Vagina (tissue), 2 donors: ENCODE measurements at regions of chr12 and their contacts with region 1.

Region 1: GRCh38 chr12:54398995-54399793 is 14.7 kb upstream of the ZNF385A start:
- DNase-seq: no peak
- H3K4me3 ChIP-seq: no peak overlapping the region
- H3K27ac ChIP-seq: no peak overlapping the region
- H3K4me1 ChIP-seq: no peaks in the 10 kb centered on the region
- H3K27me3 ChIP-seq: no peaks in the 10 kb centered on the region
- CTCF ChIP-seq: peak; percentile 96 to 98 (median 98)
- POLR2A ChIP-seq: no peak

Region 2: DNA sequence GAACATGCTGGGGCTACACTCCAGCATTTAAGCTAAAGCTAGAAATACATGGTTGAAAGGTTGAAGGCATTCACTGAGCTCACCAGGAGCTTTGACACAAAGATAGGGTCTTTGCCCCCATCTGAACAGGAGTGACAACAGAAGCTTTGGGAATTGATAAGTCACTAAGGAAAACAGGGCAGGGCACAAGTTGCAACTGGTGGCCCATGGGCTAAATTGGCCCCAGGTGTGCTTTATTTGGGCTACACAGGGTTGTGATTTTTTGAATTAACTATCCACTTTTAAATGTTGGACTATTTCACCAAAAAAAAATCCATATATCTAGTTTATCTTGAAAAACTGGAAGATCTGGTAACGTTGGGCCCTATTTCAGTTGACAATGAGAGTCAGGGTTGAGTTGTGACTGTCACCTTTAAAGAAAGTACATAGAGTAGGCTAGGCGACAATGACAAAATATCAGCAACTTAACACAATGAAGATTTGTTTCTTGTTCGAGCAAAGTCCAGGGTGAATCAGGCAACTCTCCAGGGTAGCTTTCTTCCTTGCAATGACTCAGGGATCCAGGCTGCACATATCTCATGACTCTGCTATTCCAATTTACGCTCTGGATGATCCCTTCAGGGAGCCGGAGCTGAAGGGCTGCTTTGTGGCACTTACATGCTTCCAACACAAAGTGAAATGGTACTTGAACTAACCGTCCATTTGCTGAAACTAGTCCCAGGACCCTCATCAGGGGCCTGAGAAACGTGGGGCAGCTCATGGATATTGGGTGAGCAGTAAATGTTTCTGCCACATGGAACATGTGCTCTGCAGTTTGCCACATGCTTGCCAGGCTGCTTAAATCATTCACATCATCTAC is 1406.3 kb before region 1 on chr12:
- intact Hi-C with region 1: no loop called
- DNase-seq: no peak
- H3K4me3 ChIP-seq: no peak overlapping the region
- H3K27ac ChIP-seq: no peak overlapping the region
- H3K4me1 ChIP-seq: no peaks in the 10 kb centered on the region
- H3K27me3 ChIP-seq: no peaks in the 10 kb centered on the region
- CTCF ChIP-seq: no peak
- POLR2A ChIP-seq: no peak

Region 3: DNA sequence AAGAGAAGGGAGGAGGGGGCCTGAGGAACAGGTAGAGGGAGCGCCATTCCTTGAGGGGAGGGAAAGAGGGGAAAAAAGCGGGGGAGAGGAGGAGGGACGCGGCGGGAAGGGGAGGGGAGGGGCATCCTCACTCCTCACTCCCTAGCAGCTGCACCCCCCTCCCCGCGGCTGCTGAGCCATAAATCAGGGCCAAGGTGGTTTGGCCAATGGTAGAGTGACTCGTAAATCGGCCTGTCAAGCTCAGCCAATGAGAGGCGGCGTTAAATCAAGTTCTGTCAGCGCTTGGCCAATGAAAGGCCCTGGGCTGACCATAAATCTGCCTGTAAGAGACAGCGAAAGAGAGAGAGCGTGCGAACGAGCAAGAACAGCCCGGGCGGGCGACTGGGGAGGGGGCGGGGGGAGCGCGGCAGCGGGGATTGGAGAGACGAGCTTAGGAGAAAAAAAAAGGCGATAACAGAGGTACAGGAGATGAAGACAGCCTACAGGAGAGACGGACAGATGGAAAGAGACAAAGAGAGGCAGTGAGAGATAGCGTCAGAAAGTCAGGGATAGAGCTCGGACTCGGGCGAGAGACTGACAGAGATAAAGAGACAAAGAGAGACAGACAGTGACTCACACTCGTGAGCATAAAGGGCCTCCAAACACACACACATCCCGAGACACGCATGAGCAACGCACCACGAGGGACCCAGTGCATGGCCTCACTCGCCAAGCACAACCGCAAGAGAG is 40.0 kb before region 1 on chr12:
- intact Hi-C with region 1: no loop called
- DNase-seq: peak in 1 of 2 donors; percentile 99
- H3K4me3 ChIP-seq: peak overlapping the region; percentile 52 to 75
- H3K27ac ChIP-seq: peak overlapping the region; percentile 92
- H3K4me1 ChIP-seq: peaks cover 24% of the 10 kb centered on the region
- H3K27me3 ChIP-seq: no peaks in the 10 kb centered on the region
- CTCF ChIP-seq: no peak
- POLR2A ChIP-seq: peak in 1 of 2 donors; percentile 38

Region 4: GRCh38 chr12:54439521-54440255 is 40.5 kb after region 1 on chr12:
- intact Hi-C with region 1: loop called (anchors 2 kb)
- DNase-seq: no peak
- H3K4me3 ChIP-seq: no peak overlapping the region
- H3K27ac ChIP-seq: peak overlapping the region; percentile 40
- H3K4me1 ChIP-seq: no peaks in the 10 kb centered on the region
- H3K27me3 ChIP-seq: no peaks in the 10 kb centered on the region
- CTCF ChIP-seq: peak; percentile 79 to 89 (median 86)
- POLR2A ChIP-seq: no peak